GM12878 (cell line): ENCODE measurements at regions of chr1 and their contacts with region 1.

Region 1: DNA sequence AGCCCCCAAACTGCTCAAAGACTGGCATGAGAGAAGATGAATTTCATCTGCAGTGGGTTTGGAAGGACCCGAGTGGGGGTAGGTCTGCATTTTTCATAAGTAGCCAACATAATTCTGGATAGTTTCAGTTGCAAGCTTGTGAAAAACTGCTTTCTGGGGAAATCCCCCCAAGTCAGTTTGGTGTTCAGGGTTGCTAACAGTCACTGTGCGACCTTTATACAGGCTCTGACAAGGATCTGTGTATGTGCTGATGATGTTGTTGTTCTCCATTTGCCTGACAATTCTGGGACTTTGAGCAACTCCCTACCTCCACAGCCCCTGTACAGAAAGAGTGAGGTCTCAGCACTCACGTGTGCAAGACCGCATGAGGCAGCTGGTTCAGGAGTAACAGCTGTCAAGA is 87.9 kb downstream of the SUSD4 start:
- DNase-seq: no peak
- ATAC-seq: peak; percentile 44
- H3K4me3 ChIP-seq: no peak overlapping the region
- H3K27ac ChIP-seq: no peak overlapping the region
- H3K4me1 ChIP-seq: no peaks in the 10 kb centered on the region
- H3K27me3 ChIP-seq: no peaks in the 10 kb centered on the region; a peak in 1 of 4 replicates
- CTCF ChIP-seq: no peak
- EP300 ChIP-seq: no peak
- POLR2A ChIP-seq: no peak
- RAD21 ChIP-seq: no peak

Region 2: GRCh38 chr1:223297800-223298199 is 21.8 kb after region 1 on chr1:
- CTCF ChIA-PET with region 1: no interaction called
- POLR2A ChIA-PET with region 1: no interaction called
- RAD21 ChIA-PET with region 1: no interaction called
- SMC1A ChIA-PET with region 1: no interaction called
- in situ Hi-C with region 1: no loop called
- intact Hi-C with region 1: loop called (anchors 2 kb)
- DNase-seq: no peak
- ATAC-seq: no peak
- H3K4me3 ChIP-seq: no peak overlapping the region
- H3K27ac ChIP-seq: no peak overlapping the region
- H3K4me1 ChIP-seq: no peaks in the 10 kb centered on the region
- H3K27me3 ChIP-seq: no peaks in the 10 kb centered on the region; a peak in 2 of 4 replicates
- CTCF ChIP-seq: no peak
- EP300 ChIP-seq: no peak
- POLR2A ChIP-seq: no peak
- RAD21 ChIP-seq: no peak

Region 3: DNA sequence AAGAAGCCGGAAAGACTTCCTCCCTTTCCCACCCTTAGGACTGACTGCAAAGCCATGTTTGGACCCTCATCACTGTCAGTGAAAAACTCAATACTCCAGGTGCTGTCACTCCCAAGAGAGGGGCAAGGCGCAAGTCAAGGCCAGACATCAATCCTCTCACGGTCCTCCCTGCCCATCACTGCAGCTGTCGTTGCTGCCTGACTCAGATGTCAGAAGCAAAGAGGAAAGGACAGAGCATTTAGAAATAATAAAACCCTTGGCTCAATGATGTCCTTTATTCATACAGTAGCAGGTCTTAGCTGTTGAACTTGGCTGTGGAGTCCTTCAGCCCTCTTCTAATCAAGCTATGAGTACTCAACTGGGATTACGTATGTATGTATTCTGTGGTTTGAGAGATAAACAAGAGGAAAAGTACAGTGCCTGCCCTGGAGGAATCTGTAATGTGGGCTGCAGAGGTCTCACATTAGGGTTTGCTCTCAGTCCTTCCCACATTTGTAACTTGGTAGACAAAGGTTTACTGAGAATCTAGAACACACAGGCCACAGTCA is 74.4 kb after region 1 on chr1:
- CTCF ChIA-PET with region 1: no interaction called
- POLR2A ChIA-PET with region 1: no interaction called
- RAD21 ChIA-PET with region 1: no interaction called
- SMC1A ChIA-PET with region 1: no interaction called
- in situ Hi-C with region 1: no loop called
- intact Hi-C with region 1: no loop called
- DNase-seq: no peak
- ATAC-seq: no peak
- H3K4me3 ChIP-seq: no peak overlapping the region
- H3K27ac ChIP-seq: no peak overlapping the region
- H3K4me1 ChIP-seq: no peaks in the 10 kb centered on the region
- H3K27me3 ChIP-seq: peaks cover 0 to 3% of the 10 kb centered on the region in 2 experiments; a peak in 1 of 4 replicates
- CTCF ChIP-seq: no peak
- EP300 ChIP-seq: no peak
- POLR2A ChIP-seq: no peak
- RAD21 ChIP-seq: no peak